Left cardiac atrium (tissue), 4 donors: ENCODE measurements at regions of chr7 and their contacts with region 1.

Region 1: DNA sequence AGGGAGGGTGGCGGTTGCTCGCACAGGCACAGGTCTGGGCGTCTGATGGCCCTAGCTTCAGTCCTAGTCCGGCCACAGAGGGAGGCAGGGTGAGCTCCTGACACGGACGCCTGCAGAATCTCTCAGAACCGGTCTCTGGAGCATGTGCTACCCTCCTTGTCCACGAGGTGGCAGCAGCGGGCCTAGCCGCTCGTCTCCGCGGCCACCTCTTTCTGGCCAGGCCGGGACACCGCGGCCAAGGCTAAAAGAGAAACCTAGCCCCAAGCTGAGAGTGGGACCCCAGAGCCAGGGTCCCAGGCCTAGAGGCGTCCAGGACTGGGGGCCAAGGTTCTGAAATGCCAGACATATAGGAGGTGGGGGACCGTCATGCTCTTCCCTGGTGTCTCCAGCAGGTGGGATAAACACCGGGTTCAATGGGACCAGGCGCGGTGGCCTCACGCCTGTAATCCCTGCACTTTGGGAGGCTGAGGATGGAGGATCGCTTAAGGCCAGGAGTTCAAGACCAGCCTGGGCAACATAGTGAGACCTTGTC is 3.2 kb upstream of the LAT2 start:
- DNase-seq: peak; percentile 88
- ATAC-seq: peak; percentile 74 to 80

Region 2: GRCh38 chr7:73865738-73866445 is 340.8 kb before region 1 on chr7:
- intact Hi-C with region 1: loop called in 1 of 2 experiments (anchors 5 kb)
- DNase-seq: peak; percentile 67
- ATAC-seq: peak; percentile 64 to 71

Region 3: DNA sequence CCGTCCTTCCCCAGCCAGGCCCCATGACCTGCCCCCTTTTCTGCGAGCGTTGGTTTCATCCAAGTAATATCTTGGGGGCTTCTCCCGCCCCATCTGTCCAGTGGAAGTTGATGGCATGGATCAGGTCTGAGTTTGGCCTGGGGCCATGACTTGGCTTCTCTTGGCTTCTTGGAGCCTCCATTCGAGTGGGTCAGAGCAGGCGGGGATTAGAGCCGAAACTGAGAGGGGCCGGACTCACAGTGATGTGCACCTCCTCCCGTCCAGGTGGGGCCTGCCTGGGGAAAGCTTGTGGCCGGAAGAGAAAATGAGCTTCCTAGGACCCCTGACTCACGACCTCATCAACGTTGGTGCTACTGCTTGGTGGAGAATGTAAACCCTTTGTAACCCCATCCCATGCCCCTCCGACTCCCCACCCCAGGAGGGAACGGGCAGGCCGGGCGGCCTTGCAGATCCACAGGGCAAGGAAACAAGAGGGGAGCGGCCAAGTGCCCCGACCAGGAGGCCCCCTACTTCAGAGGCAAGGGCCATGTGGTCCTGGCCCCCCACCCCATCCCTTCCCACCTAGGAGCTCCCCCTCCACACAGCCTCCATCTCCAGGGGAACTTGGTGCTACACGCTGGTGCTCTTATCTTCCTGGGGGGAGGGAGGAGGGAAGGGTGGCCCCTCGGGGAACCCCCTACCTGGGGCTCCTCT is 138.1 kb before region 1 on chr7:
- intact Hi-C with region 1: loop called in 1 of 2 experiments (anchors 5 kb)
- DNase-seq: no peak
- ATAC-seq: peak in 1 of 2 donors; percentile 3